Caco-2 (cell line): ENCODE measurements at regions of chr11 and their contacts with region 1.

Region 1: DNA sequence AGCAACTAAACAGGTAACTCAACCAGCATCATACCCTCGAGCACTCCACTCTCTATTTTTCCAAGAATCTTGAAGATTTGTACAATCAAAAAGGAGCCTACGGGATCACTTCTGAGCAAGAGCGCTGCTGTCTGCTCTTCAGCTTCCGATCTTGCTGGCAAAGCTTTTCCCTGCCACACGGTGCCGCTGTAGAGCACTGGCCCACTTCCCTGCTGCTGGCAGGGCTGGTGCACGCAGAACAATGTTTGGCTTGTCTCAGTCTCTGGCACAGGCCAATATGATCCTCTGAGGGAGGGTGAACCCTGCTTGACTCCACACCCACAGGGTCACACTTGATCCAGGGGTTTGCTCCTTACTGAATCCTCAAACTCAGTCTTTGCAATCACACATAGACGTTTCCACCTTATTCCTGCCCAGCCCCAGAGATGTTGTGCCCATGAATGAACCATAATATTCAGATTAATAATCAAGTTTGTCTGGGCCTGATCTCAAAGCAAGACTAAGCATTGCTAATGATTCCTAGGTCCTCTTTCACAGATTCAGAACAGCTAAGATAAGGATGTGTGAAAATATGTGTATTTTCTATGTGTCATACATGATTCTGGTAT is 536.6 kb downstream of the SOX6 start:
- DNase-seq: peak; percentile 68 to 80
- H3K4me3 ChIP-seq: no peak overlapping the region
- H3K4me3 Mint-ChIP-seq: no peak overlapping the region
- H3K27ac Mint-ChIP-seq: no peak overlapping the region
- H3K4me1 ChIP-seq: no peaks in the 10 kb centered on the region
- H3K4me1 Mint-ChIP-seq: no peaks in the 10 kb centered on the region
- H3K27me3 ChIP-seq: no peaks in the 10 kb centered on the region
- H3K27me3 Mint-ChIP-seq: peaks cover 3% of the 10 kb centered on the region
- CTCF ChIP-seq: peak; percentile 90 to 95

Region 2: DNA sequence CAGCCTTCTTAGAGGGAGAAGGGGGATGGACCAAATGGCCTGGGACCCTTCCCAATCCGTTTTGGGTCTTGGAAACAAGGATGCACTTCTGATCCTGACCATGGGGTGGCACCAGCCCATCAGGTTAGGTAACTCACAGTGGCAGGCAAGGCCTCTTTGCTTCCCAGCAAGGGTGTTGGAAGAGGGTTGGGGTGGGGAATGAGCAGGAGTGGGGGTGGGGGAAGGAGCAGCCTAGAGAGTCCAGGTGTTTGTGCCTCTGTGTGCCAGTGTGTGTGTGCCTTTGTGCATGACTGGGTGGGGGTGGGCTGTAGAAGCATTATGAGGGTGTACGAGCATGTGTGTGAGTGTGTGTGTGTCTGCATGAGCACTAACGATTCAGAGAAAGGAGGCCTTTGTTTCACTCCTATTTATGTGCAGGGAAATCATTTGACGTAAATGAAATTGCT is 492.0 kb before region 1 on chr11:
- CTCF ChIA-PET with region 1: no interaction called
- POLR2A ChIA-PET with region 1: no interaction called
- intact Hi-C with region 1: loop called (anchors 2 kb)
- DNase-seq: peak; percentile 71 to 78
- H3K4me3 ChIP-seq: no peak overlapping the region
- H3K4me3 Mint-ChIP-seq: no peak overlapping the region
- H3K27ac Mint-ChIP-seq: no peak overlapping the region
- H3K4me1 ChIP-seq: no peaks in the 10 kb centered on the region
- H3K4me1 Mint-ChIP-seq: no peaks in the 10 kb centered on the region
- H3K27me3 ChIP-seq: peaks cover 2% of the 10 kb centered on the region; the same call in 1 of the 2 replicates
- H3K27me3 Mint-ChIP-seq: peaks cover 8% of the 10 kb centered on the region
- CTCF ChIP-seq: peak; percentile 67 to 92

Region 3: GRCh38 chr11:15770798-15771414 is 48.9 kb before region 1 on chr11:
- CTCF ChIA-PET with region 1: no interaction called
- POLR2A ChIA-PET with region 1: no interaction called
- intact Hi-C with region 1: no loop called
- DNase-seq: peak; percentile 40 to 48
- H3K4me3 ChIP-seq: no peak overlapping the region
- H3K4me3 Mint-ChIP-seq: no peak overlapping the region
- H3K27ac Mint-ChIP-seq: no peak overlapping the region
- H3K4me1 ChIP-seq: peaks cover 27% of the 10 kb centered on the region
- H3K4me1 Mint-ChIP-seq: peaks cover 29% of the 10 kb centered on the region
- H3K27me3 ChIP-seq: no peaks in the 10 kb centered on the region
- H3K27me3 Mint-ChIP-seq: no peaks in the 10 kb centered on the region
- CTCF ChIP-seq: peak; percentile 48 to 53

Region 4: GRCh38 chr11:15865212-15865987 is 45.6 kb after region 1 on chr11:
- CTCF ChIA-PET with region 1: no interaction called
- POLR2A ChIA-PET with region 1: no interaction called
- intact Hi-C with region 1: no loop called
- DNase-seq: no peak
- H3K4me3 ChIP-seq: no peak overlapping the region
- H3K4me3 Mint-ChIP-seq: no peak overlapping the region
- H3K27ac Mint-ChIP-seq: no peak overlapping the region
- H3K4me1 ChIP-seq: no peaks in the 10 kb centered on the region
- H3K4me1 Mint-ChIP-seq: no peaks in the 10 kb centered on the region
- H3K27me3 ChIP-seq: no peaks in the 10 kb centered on the region
- H3K27me3 Mint-ChIP-seq: peaks cover 4% of the 10 kb centered on the region
- CTCF ChIP-seq: no peak

Region 5: DNA sequence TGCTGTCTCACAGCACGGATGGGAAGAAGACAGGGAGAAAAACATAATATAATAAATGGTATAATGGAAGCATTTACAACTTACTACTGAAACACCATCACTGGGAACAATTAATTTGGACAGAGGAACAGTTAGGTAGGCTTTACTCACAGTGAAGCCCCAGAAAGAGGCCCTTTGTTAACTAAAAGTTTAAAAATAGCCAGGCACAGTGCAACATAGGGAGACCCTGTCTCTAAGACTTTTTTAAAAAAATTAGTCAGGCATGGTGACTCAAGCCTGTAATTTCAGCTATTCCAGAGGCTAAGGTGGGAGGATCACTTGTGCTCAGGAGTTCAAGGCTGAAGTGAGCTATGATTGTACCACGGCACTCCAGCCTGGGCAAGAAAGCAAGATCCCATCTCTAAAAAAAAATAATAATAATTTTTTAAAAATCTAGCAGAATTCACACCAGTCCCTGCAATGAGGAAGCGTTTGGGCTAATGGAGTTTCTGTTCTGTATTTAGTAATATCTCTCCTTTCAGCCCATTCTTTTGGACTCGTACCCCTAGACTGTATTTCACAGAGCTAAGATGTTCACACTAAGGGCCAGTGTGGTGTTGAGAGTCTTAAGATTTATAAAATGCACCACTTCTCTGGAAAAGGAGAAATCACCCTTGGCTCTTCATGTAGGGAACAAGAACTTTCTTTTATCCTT is 261.1 kb after region 1 on chr11:
- CTCF ChIA-PET with region 1: no interaction called
- POLR2A ChIA-PET with region 1: interaction called, 10 read pairs
- intact Hi-C with region 1: no loop called
- DNase-seq: no peak
- H3K4me3 ChIP-seq: no peak overlapping the region
- H3K4me3 Mint-ChIP-seq: no peak overlapping the region
- H3K27ac Mint-ChIP-seq: no peak overlapping the region
- H3K4me1 ChIP-seq: no peaks in the 10 kb centered on the region
- H3K4me1 Mint-ChIP-seq: peaks cover 10% of the 10 kb centered on the region
- H3K27me3 ChIP-seq: no peaks in the 10 kb centered on the region
- H3K27me3 Mint-ChIP-seq: no peaks in the 10 kb centered on the region
- CTCF ChIP-seq: no peak